Endothelial cell of umbilical vein (primary cell): ENCODE measurements at regions of chr16 and their contacts with region 1.

Region 1: DNA sequence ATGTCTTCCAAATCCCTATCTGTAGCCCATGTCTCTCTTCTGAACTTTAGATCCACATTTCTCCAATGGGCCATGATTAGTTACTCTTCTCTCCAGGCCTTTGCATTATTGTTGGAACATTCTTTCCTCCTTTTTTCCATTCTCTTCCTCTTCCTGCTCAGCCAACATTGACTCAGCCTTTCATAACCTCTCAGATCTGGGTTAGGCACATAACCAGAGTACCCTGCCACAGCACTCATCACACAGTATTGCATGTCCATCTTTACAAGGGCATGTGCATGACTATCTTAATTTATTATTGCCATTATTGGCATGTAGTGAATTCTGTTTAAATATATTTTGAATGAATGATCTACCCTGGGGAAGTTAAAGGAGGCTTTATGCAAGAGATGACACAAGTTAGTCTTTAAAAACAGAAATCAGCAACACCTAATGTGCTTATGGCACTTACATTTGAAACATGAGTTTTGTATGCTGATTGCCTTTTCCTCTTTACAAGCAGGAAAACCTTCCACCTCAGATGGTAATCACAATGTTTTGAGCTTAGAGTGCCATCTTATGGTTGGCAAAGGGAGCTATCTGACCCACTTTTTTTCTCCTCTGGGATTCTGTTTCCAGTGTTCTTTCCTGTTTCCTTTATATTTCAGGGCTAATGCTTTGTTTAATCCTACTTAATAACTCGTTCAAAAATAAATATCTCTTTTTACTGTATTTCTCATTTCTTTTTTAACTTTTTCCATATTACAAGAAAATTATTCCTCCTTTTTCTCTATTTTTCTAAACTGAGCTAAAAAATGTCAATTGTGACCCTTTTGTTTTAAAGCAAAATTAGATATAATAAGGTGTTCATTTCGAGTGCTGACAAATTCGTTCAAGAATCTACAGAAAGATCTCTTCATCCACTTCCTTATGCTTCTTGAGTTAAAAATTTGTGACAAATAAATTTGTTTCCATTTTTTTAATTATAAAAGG is 151.0 kb upstream of the RBL2 start:
- DNase-seq: peak; percentile 74
- H3K4me3 ChIP-seq: no peak overlapping the region
- H3K27ac ChIP-seq: no peak overlapping the region
- H3K4me1 ChIP-seq: peaks cover 11% of the 10 kb centered on the region
- H3K27me3 ChIP-seq: no peaks in the 10 kb centered on the region
- CTCF ChIP-seq: peak; percentile 51 to 64
- POLR2A ChIP-seq: no peak

Region 2: GRCh38 chr16:52191531-52192134 is 1091.6 kb before region 1 on chr16:
- CTCF ChIA-PET with region 1: interaction called, 32 read pairs
- POLR2A ChIA-PET with region 1: no interaction called
- dilution Hi-C with region 1: no loop called
- intact Hi-C with region 1: no loop called
- DNase-seq: peak; percentile 60
- H3K4me3 ChIP-seq: no peak overlapping the region
- H3K27ac ChIP-seq: no peak overlapping the region
- H3K4me1 ChIP-seq: no peaks in the 10 kb centered on the region
- H3K27me3 ChIP-seq: no peaks in the 10 kb centered on the region
- CTCF ChIP-seq: peak; percentile 86 to 88
- POLR2A ChIP-seq: no peak

Region 3: DNA sequence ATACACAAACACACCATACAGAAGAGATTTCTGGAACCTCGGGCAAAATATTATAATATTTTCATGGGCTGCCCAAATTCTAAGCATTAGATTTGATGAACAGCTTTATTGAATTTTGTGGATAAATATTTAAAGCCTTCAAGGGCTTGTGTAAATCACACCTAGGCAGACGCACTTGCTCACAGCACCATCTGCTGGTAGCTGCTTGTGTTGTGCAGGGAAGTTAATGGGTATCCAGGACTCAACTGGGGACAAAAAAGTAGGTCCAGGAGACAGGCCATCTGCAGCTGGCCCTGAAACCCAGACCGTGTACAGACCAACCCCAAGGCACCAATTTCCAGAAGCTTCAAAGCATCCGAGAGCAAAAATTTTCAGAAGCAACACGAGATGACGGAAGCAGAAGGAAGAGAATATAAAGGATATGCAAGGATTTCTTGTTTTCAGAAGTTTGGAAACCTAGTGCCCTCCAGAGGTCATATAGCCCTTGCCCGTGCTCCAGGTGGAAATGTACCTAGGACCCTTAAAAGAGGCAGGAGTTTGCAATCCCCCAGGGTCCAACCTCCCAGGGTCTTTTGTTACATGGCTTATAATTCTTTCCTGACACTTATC is 370.6 kb before region 1 on chr16:
- CTCF ChIA-PET with region 1: interaction called, 4 read pairs
- POLR2A ChIA-PET with region 1: no interaction called
- dilution Hi-C with region 1: no loop called
- intact Hi-C with region 1: loop called (anchors 2 kb)
- DNase-seq: peak; percentile 48
- H3K4me3 ChIP-seq: no peak overlapping the region
- H3K27ac ChIP-seq: no peak overlapping the region
- H3K4me1 ChIP-seq: no peaks in the 10 kb centered on the region
- H3K27me3 ChIP-seq: no peaks in the 10 kb centered on the region
- CTCF ChIP-seq: peak; percentile 56 to 68
- POLR2A ChIP-seq: no peak

Region 4: GRCh38 chr16:52976539-52977167 is 306.6 kb before region 1 on chr16:
- CTCF ChIA-PET with region 1: interaction called, 28 read pairs
- POLR2A ChIA-PET with region 1: no interaction called
- dilution Hi-C with region 1: no loop called
- intact Hi-C with region 1: loop called (anchors 5 kb)
- DNase-seq: peak; percentile 17
- H3K4me3 ChIP-seq: no peak overlapping the region
- H3K27ac ChIP-seq: no peak overlapping the region
- H3K4me1 ChIP-seq: no peaks in the 10 kb centered on the region
- H3K27me3 ChIP-seq: no peaks in the 10 kb centered on the region
- CTCF ChIP-seq: peak in 1 of 2 donors; percentile 31
- POLR2A ChIP-seq: no peak

Region 5: GRCh38 chr16:53022374-53022773 is 260.9 kb before region 1 on chr16:
- CTCF ChIA-PET with region 1: interaction called, 20 read pairs
- POLR2A ChIA-PET with region 1: no interaction called
- dilution Hi-C with region 1: no loop called
- intact Hi-C with region 1: no loop called
- DNase-seq: peak; percentile 53
- H3K4me3 ChIP-seq: no peak overlapping the region
- H3K27ac ChIP-seq: no peak overlapping the region
- H3K4me1 ChIP-seq: no peaks in the 10 kb centered on the region
- H3K27me3 ChIP-seq: no peaks in the 10 kb centered on the region
- CTCF ChIP-seq: peak; percentile 49 to 54
- POLR2A ChIP-seq: no peak

Region 6: GRCh38 chr16:53220585-53220984 is 62.7 kb before region 1 on chr16:
- CTCF ChIA-PET with region 1: interaction called, 10 read pairs
- POLR2A ChIA-PET with region 1: no interaction called
- dilution Hi-C with region 1: no loop called
- intact Hi-C with region 1: no loop called
- DNase-seq: peak; percentile 71
- H3K4me3 ChIP-seq: peak overlapping the region in 1 of 3 experiments; percentile 49
- H3K27ac ChIP-seq: peak overlapping the region; percentile 91
- H3K4me1 ChIP-seq: peaks cover 37% of the 10 kb centered on the region
- H3K27me3 ChIP-seq: no peaks in the 10 kb centered on the region
- CTCF ChIP-seq: peak; percentile 42 to 46
- POLR2A ChIP-seq: no peak

Region 7: DNA sequence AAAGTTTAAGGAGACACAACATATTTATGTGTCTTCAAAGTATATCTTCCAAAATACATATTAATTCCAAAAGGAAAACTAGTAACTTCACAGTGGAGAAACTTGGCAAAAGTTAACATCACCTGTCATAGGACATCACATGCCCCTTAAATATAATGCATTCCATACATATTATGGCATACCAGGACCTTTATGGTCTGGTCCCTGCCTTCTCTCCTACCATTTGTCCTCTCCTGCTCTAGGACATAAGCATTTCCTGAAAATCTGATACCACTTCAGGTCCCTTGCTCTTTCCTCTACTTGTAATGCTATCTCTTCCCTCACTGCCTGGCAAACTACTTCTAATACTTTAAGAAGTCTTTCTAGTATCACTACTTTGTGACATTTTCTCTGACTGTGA is 17.1 kb before region 1 on chr16:
- CTCF ChIA-PET with region 1: interaction called, 11 read pairs
- POLR2A ChIA-PET with region 1: no interaction called
- dilution Hi-C with region 1: no loop called
- intact Hi-C with region 1: no loop called
- DNase-seq: no peak
- H3K4me3 ChIP-seq: no peak overlapping the region
- H3K27ac ChIP-seq: no peak overlapping the region
- H3K4me1 ChIP-seq: no peaks in the 10 kb centered on the region
- H3K27me3 ChIP-seq: no peaks in the 10 kb centered on the region
- CTCF ChIP-seq: no peak
- POLR2A ChIP-seq: no peak

Region 8: DNA sequence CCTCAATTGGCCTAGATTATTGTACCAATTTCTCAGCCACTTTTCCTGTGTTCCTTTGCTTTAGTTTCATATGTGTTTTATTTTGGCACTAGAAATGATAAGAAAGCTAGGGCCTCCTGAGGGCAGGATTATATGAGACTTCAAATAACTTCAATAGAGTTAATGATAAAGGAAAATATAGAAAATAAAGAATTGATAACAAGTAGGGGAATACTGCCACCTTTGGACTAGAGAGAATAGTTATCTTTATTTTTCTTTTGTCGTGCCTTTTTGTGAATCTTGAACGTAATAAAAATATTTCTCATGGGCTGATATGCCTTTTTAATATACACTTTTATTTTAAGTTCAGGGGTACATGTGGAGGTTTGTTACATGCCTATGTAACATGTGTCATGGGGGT is 121.7 kb after region 1 on chr16:
- CTCF ChIA-PET with region 1: no interaction called
- POLR2A ChIA-PET with region 1: no interaction called
- dilution Hi-C with region 1: no loop called
- intact Hi-C with region 1: no loop called
- DNase-seq: no peak
- H3K4me3 ChIP-seq: no peak overlapping the region
- H3K27ac ChIP-seq: no peak overlapping the region
- H3K4me1 ChIP-seq: no peaks in the 10 kb centered on the region
- H3K27me3 ChIP-seq: no peaks in the 10 kb centered on the region
- CTCF ChIP-seq: no peak
- POLR2A ChIP-seq: no peak

Region 9: GRCh38 chr16:53703590-53704444 is 420.6 kb after region 1 on chr16 and contains the starts of genes FTO and RPGRIP1L:
- CTCF ChIA-PET with region 1: no interaction called
- POLR2A ChIA-PET with region 1: no interaction called
- dilution Hi-C with region 1: no loop called
- intact Hi-C with region 1: no loop called
- DNase-seq: peak; percentile 100
- H3K4me3 ChIP-seq: peak within 1 kb of the TSS; percentile 42 to 88 (median 87)
- H3K27ac ChIP-seq: peak within 1 kb of the TSS; percentile 36
- H3K4me1 ChIP-seq: peaks cover 3% of the 10 kb centered on the region
- H3K27me3 ChIP-seq: no peaks in the 10 kb centered on the region
- CTCF ChIP-seq: no peak
- POLR2A ChIP-seq: no peak
- total RNA-seq, gene FTO: 77.8 and 87.1 TPM in 2 replicates
- total RNA-seq, gene RPGRIP1L: 9.7 and 13.2 TPM in 2 replicates